Sigmoid colon (tissue), 7 donors: ENCODE measurements at regions of chr3 and their contacts with region 1.

Region 1: DNA sequence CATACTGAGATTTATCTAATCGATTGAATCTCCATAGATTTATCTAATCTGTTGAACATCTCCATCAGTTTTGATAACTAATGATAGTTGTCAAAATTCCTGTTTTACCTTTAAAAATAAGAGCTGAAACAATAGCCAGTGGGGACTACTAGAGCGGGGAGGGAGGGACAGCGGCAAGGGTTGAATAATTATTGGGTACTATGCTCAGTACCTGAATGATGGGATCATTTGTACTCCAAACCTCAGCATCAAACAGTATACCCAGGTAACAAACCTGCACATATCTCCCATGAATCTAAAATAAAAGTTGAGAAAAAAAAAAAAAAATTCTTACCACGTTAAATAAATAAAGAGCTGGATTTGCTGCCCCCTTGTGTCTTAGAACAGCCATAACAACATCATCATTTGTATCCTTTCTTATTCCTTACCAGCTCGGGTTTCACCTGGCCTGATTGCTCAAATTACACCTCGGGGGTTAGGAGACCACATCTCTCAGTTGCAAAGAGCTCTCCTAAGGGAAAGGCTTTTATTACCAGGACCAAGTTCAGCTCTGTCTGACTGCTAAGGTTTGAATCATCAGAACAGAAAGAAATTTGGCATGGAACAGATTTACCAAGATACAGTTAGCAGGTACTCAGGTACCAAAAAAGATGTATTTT is 25.7 kb upstream of the RPL39L start:
- DNase-seq: no peak
- H3K4me3 ChIP-seq: no peak overlapping the region
- H3K27ac ChIP-seq: no peak overlapping the region
- H3K4me1 ChIP-seq: peaks cover 0 to 21% (median 10%) of the 10 kb centered on the region in 4 donors
- H3K27me3 ChIP-seq: no peaks in the 10 kb centered on the region
- CTCF ChIP-seq: peak; percentile 60 to 72 (median 69)
- EP300 ChIP-seq: no peak
- POLR2A ChIP-seq: no peak

Region 2: GRCh38 chr3:187112934-187113793 is 51.9 kb before region 1 on chr3:
- intact Hi-C with region 1: loop called (anchors 5 kb)
- DNase-seq: no peak
- H3K4me3 ChIP-seq: no peak overlapping the region
- H3K27ac ChIP-seq: no peak overlapping the region
- H3K4me1 ChIP-seq: no peaks in the 10 kb centered on the region
- H3K27me3 ChIP-seq: no peaks in the 10 kb centered on the region
- CTCF ChIP-seq: peak in 3 of 4 experiments; percentile 36 to 50 (median 41)
- EP300 ChIP-seq: no peak
- POLR2A ChIP-seq: no peak

Region 3: GRCh38 chr3:187465503-187465902 is 300.5 kb after region 1 on chr3:
- intact Hi-C with region 1: no loop called
- DNase-seq: no peak
- H3K4me3 ChIP-seq: no peak overlapping the region
- H3K27ac ChIP-seq: no peak overlapping the region
- H3K4me1 ChIP-seq: no peaks in the 10 kb centered on the region
- H3K27me3 ChIP-seq: no peaks in the 10 kb centered on the region
- CTCF ChIP-seq: no peak
- EP300 ChIP-seq: no peak
- POLR2A ChIP-seq: no peak